ENCODE measurements at regions of chr13 and their contacts with region 1.

Region 1: DNA sequence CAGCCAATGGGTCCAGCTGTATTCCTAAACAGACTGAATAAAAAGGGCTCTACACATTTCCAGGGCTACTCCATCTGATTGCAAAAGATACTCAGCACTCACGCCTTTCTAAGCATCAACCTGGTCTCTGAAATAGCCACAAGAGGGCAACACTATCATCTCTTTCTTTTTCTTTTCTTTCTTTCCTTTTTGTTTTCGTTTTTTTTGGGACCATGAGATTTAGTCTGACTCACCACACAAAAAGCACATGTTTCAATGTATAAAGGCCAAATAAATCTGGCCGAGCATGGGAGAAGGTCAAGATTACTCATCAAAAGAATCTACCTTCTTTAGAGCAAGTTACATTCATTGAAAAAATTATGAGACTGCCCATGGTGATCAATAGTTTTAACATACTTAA is 805.6 kb upstream of the ARGLU1 start:
- DNase-seq: no peak

Region 2: DNA sequence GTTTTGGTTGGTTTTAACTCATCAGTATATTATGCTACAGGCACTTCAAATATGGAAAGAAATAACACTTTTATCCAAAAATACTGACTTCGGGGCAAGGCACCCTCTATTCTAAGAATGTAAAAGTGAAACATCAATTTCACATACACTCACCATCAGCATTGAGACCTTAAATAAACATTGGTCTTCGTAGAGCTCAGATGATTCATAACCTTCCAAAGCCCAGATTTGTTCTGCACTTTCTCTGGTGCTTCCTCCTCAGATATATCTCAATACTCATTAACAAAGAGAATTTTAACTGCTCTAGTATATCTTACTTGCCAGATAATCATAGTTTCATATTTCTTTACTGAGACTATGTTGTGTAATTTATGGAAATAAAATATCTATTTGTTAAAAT is 47.5 kb after region 1 on chr13:
- intact Hi-C with region 1: no loop called
- DNase-seq: no peak

Region 3: GRCh38 chr13:107466326-107467099 is 93.0 kb after region 1 on chr13:
- intact Hi-C with region 1: no loop called
- DNase-seq: no peak

Region 4: DNA sequence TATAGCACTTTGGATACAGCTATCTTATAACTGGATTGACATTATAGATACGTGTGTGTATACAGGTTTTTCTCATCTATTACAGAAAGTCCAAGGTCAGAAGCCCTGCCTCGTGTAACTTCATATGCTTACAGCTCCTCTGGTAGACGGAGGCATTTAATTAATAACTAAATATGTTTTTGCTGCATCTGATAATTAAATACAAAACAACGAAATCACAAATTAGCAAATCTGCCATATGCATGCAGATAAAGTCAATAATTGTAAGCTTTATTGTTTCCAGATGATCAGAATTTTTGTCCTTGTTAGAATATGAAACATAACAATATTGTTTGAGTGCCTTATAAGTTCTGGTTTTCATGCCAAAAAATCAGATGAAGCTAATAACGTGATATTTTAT is 124.1 kb after region 1 on chr13:
- intact Hi-C with region 1: no loop called
- DNase-seq: no peak

Region 5: GRCh38 chr13:107650081-107650701 is 276.6 kb after region 1 on chr13:
- intact Hi-C with region 1: loop called (anchors 10 kb)
- DNase-seq: peak; percentile 34 to 92 (median 55)

Region 6: DNA sequence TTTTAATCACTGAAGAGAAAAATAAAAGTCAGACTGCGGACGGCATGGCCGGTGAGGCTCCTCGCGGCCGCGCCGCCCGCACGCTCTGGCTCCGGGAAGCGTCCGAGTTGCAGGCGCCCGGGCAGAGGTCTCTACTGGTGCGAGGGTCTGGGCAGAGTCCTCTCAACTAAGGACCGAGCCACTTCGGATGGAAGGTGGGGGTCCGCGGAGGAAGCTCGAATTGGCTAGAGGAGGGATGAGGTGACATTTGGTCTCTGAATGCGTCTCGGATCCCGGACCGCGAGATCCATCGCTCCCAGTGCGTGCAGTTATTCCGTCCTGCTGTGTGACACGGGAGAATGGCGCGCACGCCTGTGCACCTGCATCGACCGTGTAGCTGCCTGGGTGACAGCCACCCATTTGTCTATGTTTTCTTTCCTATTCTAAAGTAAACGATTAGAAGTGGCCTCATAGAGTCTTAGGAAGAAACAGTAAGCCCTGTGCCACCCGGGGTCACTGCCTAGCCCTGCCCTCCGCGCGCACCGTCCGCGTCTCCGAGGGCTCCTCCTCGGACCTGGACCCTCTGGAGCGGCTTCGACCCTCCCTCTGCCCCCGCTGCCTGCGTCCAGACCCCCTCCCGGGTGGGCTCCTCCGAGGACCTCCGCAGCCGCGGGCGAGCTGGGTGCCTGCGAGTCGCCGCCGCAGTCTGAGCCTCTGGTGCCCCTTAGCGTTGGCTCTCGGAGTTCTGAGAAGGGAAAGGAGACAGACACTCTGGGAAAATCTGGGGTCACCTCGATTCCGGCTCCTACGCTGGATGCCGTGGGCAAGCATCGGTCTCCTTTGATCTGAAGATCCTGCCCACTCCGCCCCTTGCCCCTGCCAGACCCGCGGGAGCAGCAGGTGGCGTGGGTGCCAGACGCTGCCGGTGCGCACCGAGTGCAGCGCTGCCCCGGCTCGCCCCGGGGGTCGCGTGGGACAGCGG is 494.4 kb after region 1 on chr13:
- intact Hi-C with region 1: loop called (anchors 5 kb)
- DNase-seq: peak; percentile 46 to 96 (median 73)